ENCODE measurements at regions of chr12 and their contacts with region 1.

Region 1: DNA sequence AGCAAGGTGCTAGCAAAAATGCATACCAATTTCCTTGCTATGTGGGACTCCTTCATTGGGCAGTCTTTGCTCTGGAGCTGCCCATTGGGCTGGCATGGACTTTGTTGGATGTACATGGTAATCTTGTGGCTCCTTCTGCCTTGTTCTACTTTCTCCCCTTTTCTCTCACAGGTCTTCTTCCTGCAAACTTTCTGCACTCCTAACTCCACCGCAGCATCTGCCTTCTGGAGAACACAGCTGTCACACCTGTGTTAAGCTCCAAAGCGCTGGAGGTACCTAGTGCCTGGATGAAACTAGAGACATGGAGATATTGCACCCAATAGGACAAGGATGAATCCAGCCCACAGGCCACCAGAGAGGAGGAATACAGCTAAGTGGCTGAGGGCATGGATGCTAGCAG is 60.7 kb upstream of the CCND2 start:
- DNase-seq: no peak
- H3K4me3 ChIP-seq: no peak overlapping the region
- H3K27ac ChIP-seq: no peak overlapping the region
- H3K4me1 ChIP-seq: no peaks in the 10 kb centered on the region
- H3K27me3 ChIP-seq: no peaks in the 10 kb centered on the region
- CTCF ChIP-seq: no peak
- POLR2A ChIP-seq: no peak

Region 2: DNA sequence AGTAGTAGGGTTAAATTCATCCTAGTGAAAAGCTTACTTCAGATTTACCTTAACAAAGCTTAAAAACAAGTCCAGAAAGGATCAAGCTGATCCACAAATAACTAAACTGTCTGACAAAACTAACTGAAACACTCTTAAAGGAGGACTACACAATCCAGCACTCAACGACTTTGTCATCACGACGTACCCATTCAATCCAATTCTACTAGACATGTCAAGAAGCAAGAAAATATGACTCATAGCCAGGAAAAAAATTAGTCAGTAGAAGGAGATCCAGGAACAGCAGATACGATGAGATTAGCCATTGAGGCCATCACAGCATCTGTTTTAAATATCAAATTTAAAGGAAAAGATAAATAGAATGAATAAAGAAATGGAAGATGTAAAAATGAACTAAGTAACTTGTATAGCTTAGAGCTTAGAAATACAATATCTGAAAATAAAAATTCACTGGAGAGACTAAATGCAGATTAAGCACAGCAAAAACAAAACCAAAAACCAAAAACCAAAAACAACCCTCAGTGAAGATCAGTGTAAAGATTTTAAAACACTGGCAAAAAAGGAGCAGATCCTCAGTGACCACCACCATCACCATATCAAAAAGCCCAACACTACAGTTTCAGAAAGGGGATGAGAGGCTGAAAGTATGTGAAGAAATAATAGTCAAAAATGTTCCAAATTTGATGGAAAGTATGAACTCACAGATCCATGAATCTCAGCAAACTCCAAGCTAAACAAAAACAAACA is 34.2 kb before region 1 on chr12:
- CTCF ChIA-PET with region 1: no interaction called
- POLR2A ChIA-PET with region 1: no interaction called
- dilution Hi-C with region 1: no loop called
- intact Hi-C with region 1: loop called (anchors 1 kb)
- DNase-seq: no peak
- H3K4me3 ChIP-seq: no peak overlapping the region
- H3K27ac ChIP-seq: no peak overlapping the region
- H3K4me1 ChIP-seq: no peaks in the 10 kb centered on the region
- H3K27me3 ChIP-seq: no peaks in the 10 kb centered on the region
- CTCF ChIP-seq: no peak
- POLR2A ChIP-seq: no peak